ENCODE measurements at regions of chr18 and their contacts with region 1.

Region 1: GRCh38 chr18:12668041-12668440 is 10.1 kb upstream of the SPIRE1 start:
- DNase-seq: no peak
- H3K4me3 ChIP-seq: no peak overlapping the region
- H3K27ac ChIP-seq: no peak overlapping the region
- H3K4me1 ChIP-seq: no peaks in the 10 kb centered on the region
- H3K27me3 ChIP-seq: no peaks in the 10 kb centered on the region
- CTCF ChIP-seq: no peak

Region 2: DNA sequence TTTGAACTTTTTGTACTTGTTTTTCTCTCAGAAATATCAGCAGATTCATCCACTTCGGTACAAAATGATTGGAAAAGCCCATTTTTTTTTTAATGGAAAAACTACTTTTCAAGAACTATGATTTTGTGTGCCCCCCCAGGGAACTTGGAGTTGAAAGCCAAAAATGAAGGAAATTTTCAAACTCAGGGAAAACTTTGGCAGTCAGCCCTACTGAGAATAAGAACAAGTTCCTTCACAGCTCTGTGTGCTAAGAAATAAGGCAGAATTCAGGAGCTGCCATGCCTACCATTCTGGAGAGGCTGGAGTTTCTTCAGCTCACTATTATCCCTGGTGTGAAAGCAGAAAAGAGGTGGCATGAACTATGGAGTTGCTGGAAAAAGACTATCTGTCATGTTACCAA is 1284.7 kb before region 1 on chr18:
- CTCF ChIA-PET with region 1: no interaction called
- POLR2A ChIA-PET with region 1: no interaction called
- intact Hi-C with region 1: no loop called
- DNase-seq: no peak
- H3K4me3 ChIP-seq: no peak overlapping the region
- H3K27ac ChIP-seq: no peak overlapping the region
- H3K4me1 ChIP-seq: peaks cover under 1% of the 10 kb centered on the region
- H3K27me3 ChIP-seq: peaks cover under 1% of the 10 kb centered on the region
- CTCF ChIP-seq: no peak

Region 3: GRCh38 chr18:12543697-12544096 is 124.3 kb before region 1 on chr18:
- CTCF ChIA-PET with region 1: interaction called, 19 read pairs
- POLR2A ChIA-PET with region 1: no interaction called
- intact Hi-C with region 1: no loop called
- DNase-seq: no peak
- H3K4me3 ChIP-seq: no peak overlapping the region
- H3K27ac ChIP-seq: no peak overlapping the region
- H3K4me1 ChIP-seq: no peaks in the 10 kb centered on the region
- H3K27me3 ChIP-seq: no peaks in the 10 kb centered on the region
- CTCF ChIP-seq: no peak

Region 4: DNA sequence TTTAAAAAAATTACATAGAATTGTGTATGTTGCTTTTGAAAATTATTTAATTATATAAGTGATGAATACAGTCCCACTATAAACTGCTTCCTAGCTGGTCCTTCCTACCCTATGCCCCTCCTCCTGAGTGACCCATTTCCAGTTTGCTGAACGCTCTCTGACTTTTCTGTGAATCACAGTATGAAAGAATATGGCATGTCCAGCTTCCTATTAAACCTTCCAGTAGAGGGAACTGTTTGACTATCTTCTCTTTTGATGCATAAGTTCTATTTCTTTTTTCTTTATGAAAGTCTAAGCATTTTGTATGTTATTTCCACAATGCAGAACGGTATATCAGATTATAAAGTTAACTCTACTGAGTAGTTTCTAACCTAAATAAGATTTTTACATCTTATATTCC is 76.1 kb after region 1 on chr18:
- CTCF ChIA-PET with region 1: no interaction called
- POLR2A ChIA-PET with region 1: no interaction called
- intact Hi-C with region 1: no loop called
- DNase-seq: peak; percentile 61
- H3K4me3 ChIP-seq: no peak overlapping the region
- H3K27ac ChIP-seq: no peak overlapping the region
- H3K4me1 ChIP-seq: peaks cover 7% of the 10 kb centered on the region
- H3K27me3 ChIP-seq: no peaks in the 10 kb centered on the region
- CTCF ChIP-seq: peak; percentile 67